Natural killer cell (primary cell): ENCODE measurements at regions of chr9 and their contacts with region 1.

Region 1: DNA sequence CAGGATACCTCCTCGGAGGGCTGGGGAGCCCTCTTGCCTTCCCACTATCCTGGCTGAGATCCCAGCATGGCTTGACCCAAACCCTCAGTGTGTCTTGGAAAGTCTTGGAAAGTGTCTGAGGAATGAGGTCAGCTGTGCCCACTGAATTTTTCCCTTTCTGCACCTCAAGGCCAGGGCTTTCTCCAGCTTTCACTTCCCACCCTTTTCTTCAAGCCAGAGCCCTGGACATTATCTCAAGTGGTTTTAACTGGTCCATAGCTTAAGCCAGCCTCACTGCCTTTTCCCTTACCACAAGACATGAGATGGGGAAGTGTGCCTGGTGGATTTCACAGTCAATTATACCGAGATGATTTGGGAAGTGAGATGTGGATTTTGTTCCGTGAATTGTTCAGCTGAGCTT is 35.7 kb upstream of the LHX2 start:
- DNase-seq: no peak
- ATAC-seq: no peak
- H3K4me3 ChIP-seq: no peak overlapping the region
- H3K4me3 Mint-ChIP-seq: no peak overlapping the region
- H3K27ac ChIP-seq: no peak overlapping the region
- H3K27ac Mint-ChIP-seq: no peak overlapping the region
- H3K4me1 ChIP-seq: no peaks in the 10 kb centered on the region
- H3K4me1 Mint-ChIP-seq: no peaks in the 10 kb centered on the region
- H3K27me3 ChIP-seq: no peaks in the 10 kb centered on the region
- H3K27me3 Mint-ChIP-seq: peaks cover 17 to 20% of the 10 kb centered on the region in 2 donors
- CTCF ChIP-seq: no peak

Region 2: GRCh38 chr9:123069010-123069481 is 906.8 kb before region 1 on chr9:
- intact Hi-C with region 1: no loop called
- DNase-seq: no peak
- ATAC-seq: no peak
- H3K4me3 ChIP-seq: no peak overlapping the region
- H3K4me3 Mint-ChIP-seq: no peak overlapping the region
- H3K27ac ChIP-seq: no peak overlapping the region
- H3K27ac Mint-ChIP-seq: no peak overlapping the region
- H3K4me1 ChIP-seq: no peaks in the 10 kb centered on the region
- H3K4me1 Mint-ChIP-seq: no peaks in the 10 kb centered on the region
- H3K27me3 ChIP-seq: no peaks in the 10 kb centered on the region
- H3K27me3 Mint-ChIP-seq: no peaks in the 10 kb centered on the region
- CTCF ChIP-seq: no peak

Region 3: DNA sequence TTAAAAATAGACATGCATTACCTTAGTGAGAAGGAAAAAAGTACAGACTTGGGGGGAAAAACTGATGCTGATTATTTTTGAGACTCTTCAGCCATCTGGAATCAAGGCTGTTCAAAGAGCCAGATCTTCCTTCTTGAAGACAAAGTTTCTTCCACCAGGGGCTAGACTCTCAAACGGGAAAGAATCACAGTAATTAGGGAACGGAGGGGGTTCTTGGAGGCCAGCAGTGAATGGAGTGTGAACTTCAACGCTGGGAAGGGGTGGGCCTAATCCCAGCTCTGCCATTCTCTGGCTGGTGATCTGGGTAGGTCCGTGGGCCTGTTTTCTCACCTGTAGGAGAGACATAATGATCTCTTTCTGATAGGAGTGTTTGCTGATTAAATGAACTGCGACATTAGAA is 14.6 kb after region 1 on chr9:
- intact Hi-C with region 1: loop called (anchors 2 kb)
- DNase-seq: no peak
- ATAC-seq: no peak
- H3K4me3 ChIP-seq: no peak overlapping the region
- H3K4me3 Mint-ChIP-seq: no peak overlapping the region
- H3K27ac ChIP-seq: no peak overlapping the region
- H3K27ac Mint-ChIP-seq: no peak overlapping the region
- H3K4me1 ChIP-seq: no peaks in the 10 kb centered on the region
- H3K4me1 Mint-ChIP-seq: no peaks in the 10 kb centered on the region
- H3K27me3 ChIP-seq: peaks cover 2% of the 10 kb centered on the region
- H3K27me3 Mint-ChIP-seq: peaks cover 34 to 55% of the 10 kb centered on the region in 2 donors
- CTCF ChIP-seq: no peak

Region 4: GRCh38 chr9:123997665-123998277 is 21.9 kb after region 1 on chr9:
- intact Hi-C with region 1: loop called (anchors 2 kb)
- DNase-seq: peak in 1 of 2 donors; percentile 39
- ATAC-seq: peak; percentile 54 to 64 (median 57)
- H3K4me3 ChIP-seq: no peak overlapping the region
- H3K4me3 Mint-ChIP-seq: peak overlapping the region; percentile 40
- H3K27ac ChIP-seq: no peak overlapping the region
- H3K27ac Mint-ChIP-seq: peak overlapping the region in 1 of 2 donors; percentile 20
- H3K4me1 ChIP-seq: peaks cover 30% of the 10 kb centered on the region
- H3K4me1 Mint-ChIP-seq: peaks cover 33 to 35% of the 10 kb centered on the region in 2 donors
- H3K27me3 ChIP-seq: peaks cover 51% of the 10 kb centered on the region
- H3K27me3 Mint-ChIP-seq: peaks cover 70 to 86% of the 10 kb centered on the region in 2 donors
- CTCF ChIP-seq: no peak